ENCODE measurements at regions of chr10 and their contacts with region 1.

Region 1: DNA sequence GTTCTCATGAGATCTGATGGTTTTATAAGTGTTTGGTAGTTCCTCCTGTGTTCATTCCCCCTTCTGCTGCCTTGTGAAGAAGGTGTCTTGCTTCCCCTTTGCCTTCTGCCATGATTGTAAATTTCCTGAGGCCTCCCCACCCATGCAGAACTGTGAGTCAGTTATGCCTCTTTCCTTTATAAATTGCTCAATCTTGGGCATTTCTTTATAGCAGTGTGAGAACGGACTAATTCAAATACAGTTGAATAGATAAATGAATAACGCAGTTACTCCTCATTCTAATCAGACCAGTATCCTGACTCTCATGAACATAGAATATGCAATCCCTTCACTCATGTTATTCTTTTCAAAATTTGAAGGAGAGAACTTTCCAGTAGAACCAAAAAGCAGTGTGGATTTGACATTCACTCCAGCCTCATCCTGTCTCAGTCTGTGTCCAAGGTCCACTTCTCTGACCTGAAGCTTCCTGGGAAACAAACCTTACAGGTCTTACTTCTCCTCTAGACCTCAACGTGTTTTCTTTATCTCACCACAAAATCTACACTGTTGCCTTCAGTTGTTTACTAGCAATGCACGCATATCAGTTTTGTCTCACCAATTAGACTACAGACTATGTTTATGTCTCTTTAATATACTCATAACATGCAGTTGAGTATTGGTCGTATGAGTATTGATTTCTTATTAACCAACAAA is 375.2 kb upstream of the FZD8 start:
- DNase-seq: peak; percentile 73
- ATAC-seq: peak; percentile 49
- H3K4me3 ChIP-seq: no peak overlapping the region
- H3K27ac ChIP-seq: peak overlapping the region; percentile 36
- H3K4me1 ChIP-seq: peaks cover 15% of the 10 kb centered on the region
- H3K27me3 ChIP-seq: no peaks in the 10 kb centered on the region
- CTCF ChIP-seq: no peak

Region 2: DNA sequence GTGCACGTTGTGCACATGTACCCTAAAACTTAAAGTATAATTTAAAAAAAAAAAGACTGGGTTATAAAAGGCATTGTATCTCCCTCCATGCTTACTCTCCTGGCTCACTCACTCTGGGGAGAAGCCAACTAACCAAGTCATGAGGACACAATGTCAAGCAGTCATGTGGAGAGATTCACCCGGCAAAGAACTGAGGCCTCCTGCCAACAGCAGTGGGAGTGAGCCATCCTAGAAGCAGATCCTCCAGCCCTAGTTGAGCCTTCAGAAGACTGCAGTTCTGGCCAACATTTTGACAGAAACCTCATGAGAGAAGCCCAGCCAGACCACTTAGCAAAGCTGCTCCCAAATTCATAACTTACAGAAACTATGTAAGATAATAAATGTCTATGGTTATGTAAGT is 146.5 kb after region 1 on chr10:
- CTCF ChIA-PET with region 1: no interaction called
- POLR2A ChIA-PET with region 1: no interaction called
- intact Hi-C with region 1: no loop called
- DNase-seq: no peak
- ATAC-seq: no peak
- H3K4me3 ChIP-seq: no peak overlapping the region
- H3K27ac ChIP-seq: no peak overlapping the region
- H3K4me1 ChIP-seq: no peaks in the 10 kb centered on the region
- H3K27me3 ChIP-seq: no peaks in the 10 kb centered on the region
- CTCF ChIP-seq: no peak

Region 3: GRCh38 chr10:36872702-36873393 is 855.6 kb after region 1 on chr10:
- CTCF ChIA-PET with region 1: no interaction called
- POLR2A ChIA-PET with region 1: interaction called, 10 read pairs
- intact Hi-C with region 1: no loop called
- DNase-seq: no peak
- ATAC-seq: no peak
- H3K4me3 ChIP-seq: no peak overlapping the region
- H3K27ac ChIP-seq: no peak overlapping the region
- H3K4me1 ChIP-seq: no peaks in the 10 kb centered on the region
- H3K27me3 ChIP-seq: 0 out of 2 replicates have a peak, but pooled peaks cover 3% of the 10 kb centered on the region
- CTCF ChIP-seq: no peak

Measured in PC-3 (cell line).